ENCODE measurements at regions of chr1 and their contacts with region 1.

Region 1: GRCh38 chr1:220908757-220909156 is 29.5 kb downstream of the HLX start:
- DNase-seq: peak in 1 of 3 donors; percentile 49
- ATAC-seq: peak in 1 of 2 donors; percentile 40
- H3K4me3 ChIP-seq: no peak overlapping the region
- H3K27ac ChIP-seq: no peak overlapping the region
- H3K4me1 ChIP-seq: no peaks in the 10 kb centered on the region
- H3K27me3 ChIP-seq: no peaks in the 10 kb centered on the region

Region 2: DNA sequence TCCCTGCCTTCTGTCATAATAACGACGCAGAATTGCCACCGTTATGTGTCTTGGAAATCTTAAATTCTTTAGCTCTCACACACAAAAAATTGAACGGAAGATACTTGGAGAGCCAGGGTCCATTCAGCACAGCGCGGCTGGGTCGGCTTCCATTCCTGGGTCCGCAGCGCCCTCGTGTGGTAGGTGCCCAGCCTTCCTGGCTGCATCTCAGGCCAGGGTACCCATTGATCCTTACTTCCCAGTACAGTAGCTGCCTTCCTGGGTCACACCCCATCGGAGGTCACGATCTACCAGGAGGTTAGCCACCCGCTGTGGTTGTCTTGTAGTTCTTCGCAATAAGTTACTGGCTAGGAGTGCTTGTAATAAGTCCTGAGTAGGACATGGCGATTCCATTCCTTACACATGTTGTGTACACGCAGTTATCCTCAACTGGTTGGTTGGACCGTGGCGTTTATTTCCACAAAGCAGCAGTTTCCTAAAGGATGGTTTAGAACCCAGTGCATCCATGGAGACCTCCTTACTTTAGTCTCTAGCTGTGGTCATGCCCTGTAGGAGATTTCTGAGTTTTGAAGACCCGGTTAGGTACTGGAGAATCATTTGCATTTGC is 131.9 kb before region 1 on chr1:
- intact Hi-C with region 1: no loop called
- DNase-seq: peak; percentile 80 to 93 (median 93)
- ATAC-seq: peak; percentile 93 to 95
- H3K4me3 ChIP-seq: no peak overlapping the region
- H3K27ac ChIP-seq: no peak overlapping the region
- H3K4me1 ChIP-seq: no peaks in the 10 kb centered on the region
- H3K27me3 ChIP-seq: no peaks in the 10 kb centered on the region

Region 3: GRCh38 chr1:221174330-221174999 is 265.7 kb after region 1 on chr1:
- intact Hi-C with region 1: loop called in 1 of 4 experiments (anchors 10 kb)
- DNase-seq: peak; percentile 57 to 89 (median 86)
- ATAC-seq: peak; percentile 86 to 94
- H3K4me3 ChIP-seq: no peak overlapping the region
- H3K27ac ChIP-seq: no peak overlapping the region
- H3K4me1 ChIP-seq: no peaks in the 10 kb centered on the region
- H3K27me3 ChIP-seq: no peaks in the 10 kb centered on the region

Region 4: DNA sequence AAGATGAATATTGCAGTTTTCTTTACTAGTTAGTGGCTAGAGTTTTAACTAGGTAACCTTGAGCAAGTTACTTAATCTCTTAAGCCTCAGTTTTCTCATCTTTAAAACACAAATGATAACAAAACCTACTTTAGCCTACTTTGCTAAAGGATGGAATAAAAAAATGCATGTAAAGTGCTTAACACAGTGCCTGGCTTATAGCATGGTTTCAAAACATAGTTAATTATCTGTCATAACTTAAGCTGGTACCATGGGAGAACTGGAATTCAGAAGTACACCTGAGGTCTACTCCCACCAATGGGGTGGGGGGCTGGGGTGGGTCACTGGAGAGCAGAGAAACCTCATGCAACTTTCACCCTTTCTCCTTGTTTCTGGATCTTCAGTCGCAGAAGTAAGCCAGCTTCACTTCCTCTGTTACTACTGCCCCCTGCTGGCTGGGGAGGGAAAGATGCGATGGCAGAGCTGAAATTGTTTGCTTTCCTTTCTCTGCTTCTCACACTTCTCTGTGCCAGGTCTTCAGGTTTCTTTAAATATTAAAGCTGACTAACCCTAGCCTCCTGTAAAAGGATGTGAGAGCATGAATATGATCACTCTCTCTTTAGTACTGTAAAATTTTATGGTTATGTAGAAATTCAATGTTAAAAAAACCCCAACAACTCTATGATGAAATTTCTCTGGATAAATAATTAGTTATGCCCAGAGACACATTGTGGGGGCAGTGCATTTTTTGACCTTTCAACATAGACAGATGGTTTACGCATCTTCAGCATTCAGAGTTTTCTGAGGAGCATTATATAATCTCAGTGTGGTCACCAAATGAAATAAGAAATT is 294.7 kb after region 1 on chr1:
- intact Hi-C with region 1: loop called in 1 of 4 experiments (anchors 10 kb)
- DNase-seq: peak; percentile 65 to 90 (median 87)
- ATAC-seq: peak; percentile 66 to 70
- H3K4me3 ChIP-seq: no peak overlapping the region
- H3K27ac ChIP-seq: peak overlapping the region; percentile 7
- H3K4me1 ChIP-seq: no peaks in the 10 kb centered on the region
- H3K27me3 ChIP-seq: no peaks in the 10 kb centered on the region